ENCODE measurements at regions of chr6 and their contacts with region 1.

Region 1: GRCh38 chr6:132300323-132300949 is 100.8 kb downstream of the MOXD1 start:
- DNase-seq: no peak
- H3K4me3 ChIP-seq: no peak overlapping the region
- H3K27ac ChIP-seq: no peak overlapping the region
- H3K4me1 ChIP-seq: no peaks in the 10 kb centered on the region
- H3K27me3 ChIP-seq: no peaks in the 10 kb centered on the region
- CTCF ChIP-seq: peak in 2 of 3 experiments; percentile 61 to 81; a peak in 3 of 4 replicates
- EP300 ChIP-seq: no peak
- POLR2A ChIP-seq: no peak
- RAD21 ChIP-seq: peak; percentile 90 to 93

Region 2: DNA sequence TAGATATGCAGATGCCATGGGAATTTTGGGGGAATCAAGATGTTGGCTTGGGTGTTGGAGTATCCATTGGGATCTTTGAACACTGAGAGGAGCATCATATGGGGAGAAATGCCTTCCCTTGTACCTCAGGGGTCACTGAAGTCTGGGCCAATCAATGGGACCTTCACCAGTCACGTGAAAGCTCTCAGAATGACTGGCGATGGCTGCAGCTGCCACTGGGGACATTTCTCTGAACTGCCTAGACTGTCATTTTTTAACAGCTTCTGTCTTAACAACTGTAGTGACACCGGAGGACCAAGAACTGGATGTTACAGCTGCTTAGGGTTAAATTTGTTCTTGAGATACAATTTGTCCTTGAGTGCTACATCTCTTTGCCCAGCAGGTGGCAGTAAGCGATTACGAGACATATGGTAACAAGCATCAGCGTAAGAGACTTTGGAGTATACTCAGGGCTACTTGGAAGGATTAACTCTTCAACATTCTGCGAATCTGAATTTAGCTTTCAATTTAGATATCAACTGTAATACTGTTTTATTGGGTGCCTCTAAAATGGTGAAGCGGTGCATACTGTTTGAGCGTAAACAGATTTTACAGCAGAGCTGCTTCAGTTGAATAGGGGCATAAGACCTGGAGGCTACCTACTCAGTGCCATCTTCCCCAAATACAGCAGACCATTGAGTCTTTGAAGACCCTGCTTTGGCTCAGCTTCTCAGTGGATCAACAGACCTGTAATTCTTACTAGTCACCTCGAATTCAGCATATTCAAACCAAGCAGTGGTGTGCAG is 385.3 kb before region 1 on chr6:
- CTCF ChIA-PET with region 1: interaction called, 16 read pairs
- POLR2A ChIA-PET with region 1: no interaction called
- DNase-seq: no peak
- H3K4me3 ChIP-seq: no peak overlapping the region
- H3K27ac ChIP-seq: no peak overlapping the region
- H3K4me1 ChIP-seq: no peaks in the 10 kb centered on the region
- H3K27me3 ChIP-seq: no peaks in the 10 kb centered on the region
- CTCF ChIP-seq: peak in 2 of 3 experiments; percentile 48 to 71; a peak in 3 of 4 replicates
- EP300 ChIP-seq: no peak
- POLR2A ChIP-seq: peak; percentile 19 to 84; a peak in 2 of 3 replicates
- RAD21 ChIP-seq: peak; percentile 49 to 64

Region 3: GRCh38 chr6:132270726-132271402 is 29.6 kb before region 1 on chr6:
- CTCF ChIA-PET with region 1: interaction called, 13 read pairs
- POLR2A ChIA-PET with region 1: no interaction called
- DNase-seq: no peak
- H3K4me3 ChIP-seq: no peak overlapping the region
- H3K27ac ChIP-seq: no peak overlapping the region
- H3K4me1 ChIP-seq: no peaks in the 10 kb centered on the region
- H3K27me3 ChIP-seq: no peaks in the 10 kb centered on the region
- CTCF ChIP-seq: no peak
- EP300 ChIP-seq: no peak
- POLR2A ChIP-seq: no peak
- RAD21 ChIP-seq: no peak

Region 4: DNA sequence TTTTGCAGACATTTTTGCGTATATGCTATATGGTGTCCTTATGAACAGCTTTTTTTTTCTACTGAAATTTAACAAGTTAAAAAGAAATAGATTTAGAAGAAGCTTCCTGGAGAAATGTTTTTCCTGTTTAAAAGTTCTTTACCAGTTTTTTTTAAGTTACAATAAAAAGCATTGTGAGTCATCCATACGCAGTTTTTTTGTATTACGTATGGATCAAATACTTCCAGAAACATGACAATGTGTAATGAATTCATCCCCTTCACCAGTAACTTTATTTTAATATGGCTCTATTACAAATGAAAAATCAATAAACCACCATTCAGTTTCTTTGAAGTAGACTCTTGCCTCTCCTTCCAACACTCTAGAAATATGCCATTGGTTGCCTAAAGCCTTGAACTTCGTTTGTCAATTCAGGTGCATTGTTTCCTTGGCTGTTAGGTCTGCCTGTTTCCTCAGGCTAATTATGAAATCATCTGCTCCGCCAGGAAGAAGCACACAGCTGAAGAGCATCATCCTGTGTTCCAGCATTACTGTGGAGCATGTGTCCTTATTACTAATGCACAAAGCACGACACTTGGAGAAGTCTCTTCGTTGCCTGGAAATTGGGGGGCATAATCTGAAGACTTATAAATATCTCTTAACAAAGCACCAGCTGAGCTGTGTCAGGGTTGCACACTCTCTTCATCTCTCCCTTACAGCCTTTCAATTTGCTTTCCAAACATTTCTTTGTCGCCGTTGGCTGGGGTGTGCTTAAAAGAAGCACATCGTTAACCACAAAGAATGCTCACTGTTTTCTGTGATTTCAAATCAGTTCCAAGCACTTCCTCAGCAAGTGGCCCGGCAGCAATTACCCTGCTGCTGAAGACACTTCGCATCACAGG is 91.2 kb after region 1 on chr6:
- CTCF ChIA-PET with region 1: interaction called, 60 read pairs
- POLR2A ChIA-PET with region 1: no interaction called
- DNase-seq: no peak
- H3K4me3 ChIP-seq: no peak overlapping the region
- H3K27ac ChIP-seq: no peak overlapping the region
- H3K4me1 ChIP-seq: peaks cover 4 to 11% (median 10%) of the 10 kb centered on the region in 4 experiments; a peak in 4 of 7 replicates
- H3K27me3 ChIP-seq: no peaks in the 10 kb centered on the region
- CTCF ChIP-seq: no peak
- EP300 ChIP-seq: no peak
- POLR2A ChIP-seq: no peak
- RAD21 ChIP-seq: no peak

Region 5: DNA sequence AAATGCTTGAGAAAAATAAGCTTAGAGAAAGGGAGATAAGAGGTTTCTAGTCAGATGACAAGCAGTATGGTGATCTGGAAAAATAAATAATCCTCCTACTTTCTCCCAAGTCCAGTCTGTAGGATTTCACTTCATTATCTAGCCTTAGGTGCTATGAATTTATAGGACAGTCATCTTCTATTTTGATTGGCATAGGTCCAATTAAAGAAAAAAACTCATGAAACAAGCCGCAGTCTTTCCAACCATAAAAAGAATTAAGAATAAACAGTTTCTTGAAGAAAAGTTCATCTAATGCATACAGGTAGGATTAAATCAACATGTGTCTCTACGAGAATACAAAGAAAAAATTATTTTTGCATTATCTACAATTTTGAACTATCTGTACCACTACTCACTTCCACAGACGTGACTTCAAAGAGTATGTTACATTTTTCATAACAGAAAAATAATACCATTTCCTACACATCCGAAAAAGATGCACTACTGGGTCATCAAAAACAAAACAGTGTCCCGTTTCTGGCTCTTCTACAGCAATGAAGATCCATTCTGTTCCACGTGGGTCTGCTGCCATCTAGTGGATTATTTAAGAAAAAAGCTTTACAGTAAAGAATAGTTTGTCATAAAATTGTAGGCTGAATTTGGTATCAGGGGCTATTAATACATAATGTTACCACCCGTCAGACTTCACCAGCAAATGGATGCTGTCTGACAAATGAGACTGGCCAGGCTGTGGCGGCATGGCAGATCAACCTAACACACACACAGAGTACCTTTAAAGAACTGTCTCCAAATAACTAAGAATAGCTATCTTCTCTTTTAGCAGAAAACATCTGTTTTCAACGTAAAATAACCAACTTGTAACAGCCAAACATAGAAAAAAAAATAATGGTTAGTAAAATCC is 183.6 kb after region 1 on chr6:
- CTCF ChIA-PET with region 1: interaction called, 80 read pairs
- POLR2A ChIA-PET with region 1: no interaction called
- DNase-seq: no peak
- H3K4me3 ChIP-seq: no peak overlapping the region
- H3K27ac ChIP-seq: no peak overlapping the region
- H3K4me1 ChIP-seq: no peaks in the 10 kb centered on the region
- H3K27me3 ChIP-seq: no peaks in the 10 kb centered on the region
- CTCF ChIP-seq: peak in 2 of 3 experiments; percentile 46 to 64; a peak in 2 of 4 replicates
- EP300 ChIP-seq: no peak
- POLR2A ChIP-seq: no peak
- RAD21 ChIP-seq: peak; percentile 86 to 89